B cell (primary cell): ENCODE measurements at regions of chr11 and their contacts with region 1.

Region 1: GRCh38 chr11:75406338-75406777 is 7.0 kb downstream of the RPS3 start:
- DNase-seq: no peak
- ATAC-seq: no peak
- H3K4me3 ChIP-seq: no peak overlapping the region
- H3K4me3 Mint-ChIP-seq: no peak overlapping the region
- H3K27ac ChIP-seq: peak overlapping the region in 1 of 2 donors; percentile 55
- H3K27ac Mint-ChIP-seq: no peak overlapping the region
- H3K4me1 ChIP-seq: peaks cover 10 to 11% of the 10 kb centered on the region in 2 donors
- H3K4me1 Mint-ChIP-seq: peaks cover 30% of the 10 kb centered on the region
- H3K27me3 ChIP-seq: no peaks in the 10 kb centered on the region
- H3K27me3 Mint-ChIP-seq: no peaks in the 10 kb centered on the region
- CTCF ChIP-seq: no peak

Region 2: GRCh38 chr11:75421035-75421602 is 14.8 kb after region 1 on chr11:
- CTCF ChIA-PET with region 1: interaction called, 15 read pairs
- POLR2A ChIA-PET with region 1: no interaction called
- intact Hi-C with region 1: no loop called
- DNase-seq: no peak
- ATAC-seq: no peak
- H3K4me3 ChIP-seq: no peak overlapping the region
- H3K4me3 Mint-ChIP-seq: no peak overlapping the region
- H3K27ac ChIP-seq: no peak overlapping the region
- H3K27ac Mint-ChIP-seq: no peak overlapping the region
- H3K4me1 ChIP-seq: no peaks in the 10 kb centered on the region
- H3K4me1 Mint-ChIP-seq: no peaks in the 10 kb centered on the region
- H3K27me3 ChIP-seq: no peaks in the 10 kb centered on the region
- H3K27me3 Mint-ChIP-seq: no peaks in the 10 kb centered on the region
- CTCF ChIP-seq: no peak

Region 3: GRCh38 chr11:75532200-75533048 is 126.1 kb after region 1 on chr11:
- CTCF ChIA-PET with region 1: interaction called, 22 read pairs
- POLR2A ChIA-PET with region 1: interaction called, 3 read pairs
- intact Hi-C with region 1: loop called (anchors 1 kb)
- DNase-seq: peak; percentile 84
- ATAC-seq: peak; percentile 72
- H3K4me3 ChIP-seq: no peak overlapping the region
- H3K4me3 Mint-ChIP-seq: no peak overlapping the region
- H3K27ac ChIP-seq: no peak overlapping the region
- H3K27ac Mint-ChIP-seq: peak overlapping the region; percentile 0
- H3K4me1 ChIP-seq: peaks cover 12 to 24% of the 10 kb centered on the region in 2 donors
- H3K4me1 Mint-ChIP-seq: peaks cover 36% of the 10 kb centered on the region
- H3K27me3 ChIP-seq: peaks cover 0 to 5% (median 3%) of the 10 kb centered on the region in 4 experiments
- H3K27me3 Mint-ChIP-seq: peaks cover 15% of the 10 kb centered on the region
- CTCF ChIP-seq: peak; percentile 92